ENCODE measurements at regions of chr2 and their contacts with region 1.

Region 1: DNA sequence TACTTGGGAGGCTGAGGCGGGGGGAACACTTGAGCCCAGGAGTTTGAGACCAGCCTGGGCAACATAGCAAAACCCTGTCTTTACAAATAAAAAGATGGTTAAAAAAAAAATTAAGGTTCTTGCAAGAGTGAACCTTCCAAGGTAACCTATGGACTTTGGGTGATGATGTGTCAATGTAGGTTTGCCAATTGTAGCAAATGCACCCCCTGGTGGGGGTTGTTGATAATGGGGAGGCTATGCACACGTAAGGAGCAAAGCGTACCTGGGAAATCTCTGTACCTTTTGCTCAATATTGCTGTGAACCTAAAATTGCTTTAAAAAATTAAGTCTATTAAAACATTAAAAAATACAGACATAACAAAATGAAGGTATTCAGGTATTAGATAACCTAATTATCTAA is 70.4 kb downstream of the CWC22 start:
- DNase-seq: peak; percentile 61
- ATAC-seq: no peak
- H3K4me3 Mint-ChIP-seq: no peak overlapping the region
- H3K27ac Mint-ChIP-seq: no peak overlapping the region
- H3K4me1 Mint-ChIP-seq: no peaks in the 10 kb centered on the region
- H3K27me3 Mint-ChIP-seq: no peaks in the 10 kb centered on the region
- CTCF ChIP-seq: peak; percentile 49

Region 2: GRCh38 chr2:179946810-179947615 is 10.4 kb after region 1 on chr2:
- CTCF ChIA-PET with region 1: interaction called, 10 read pairs
- POLR2A ChIA-PET with region 1: no interaction called
- intact Hi-C with region 1: no loop called
- DNase-seq: no peak
- ATAC-seq: no peak
- H3K4me3 Mint-ChIP-seq: no peak overlapping the region
- H3K27ac Mint-ChIP-seq: no peak overlapping the region
- H3K4me1 Mint-ChIP-seq: no peaks in the 10 kb centered on the region
- H3K27me3 Mint-ChIP-seq: no peaks in the 10 kb centered on the region
- CTCF ChIP-seq: no peak

Region 3: GRCh38 chr2:180017784-180018183 is 81.1 kb after region 1 on chr2:
- CTCF ChIA-PET with region 1: no interaction called
- POLR2A ChIA-PET with region 1: no interaction called
- intact Hi-C with region 1: no loop called
- DNase-seq: no peak
- ATAC-seq: no peak
- H3K4me3 Mint-ChIP-seq: no peak overlapping the region
- H3K27ac Mint-ChIP-seq: no peak overlapping the region
- H3K4me1 Mint-ChIP-seq: no peaks in the 10 kb centered on the region
- H3K27me3 Mint-ChIP-seq: peaks cover 11% of the 10 kb centered on the region
- CTCF ChIP-seq: no peak